ENCODE measurements at regions of chr16 and their contacts with region 1.

Region 1: GRCh38 chr16:71484006-71484893 is 4.9 kb downstream of the ZNF19 start:
- DNase-seq: peak; percentile 64 to 95 (median 76)
- ATAC-seq: peak; percentile 84
- H3K4me3 ChIP-seq: peak overlapping the region; percentile 94
- H3K4me3 Mint-ChIP-seq: peak overlapping the region; percentile 85
- H3K27ac ChIP-seq: peak overlapping the region; percentile 93 to 99
- H3K27ac Mint-ChIP-seq: peak overlapping the region; percentile 89
- H3K4me1 ChIP-seq: peaks cover 14% of the 10 kb centered on the region
- H3K4me1 Mint-ChIP-seq: peaks cover 15% of the 10 kb centered on the region
- H3K27me3 ChIP-seq: no peaks in the 10 kb centered on the region
- H3K27me3 Mint-ChIP-seq: no peaks in the 10 kb centered on the region
- CTCF ChIP-seq: no peak

Region 2: GRCh38 chr16:71288890-71289733 is 195.1 kb before region 1 on chr16 and contains the start of gene CMTR2:
- CTCF ChIA-PET with region 1: no interaction called
- POLR2A ChIA-PET with region 1: no interaction called
- intact Hi-C with region 1: loop called in 1 of 2 experiments (anchors 5 kb)
- DNase-seq: peak; percentile 71 to 95 (median 83)
- ATAC-seq: peak; percentile 92
- H3K4me3 ChIP-seq: peak within 1 kb of the TSS; percentile 94
- H3K4me3 Mint-ChIP-seq: peak within 1 kb of the TSS; percentile 91
- H3K27ac ChIP-seq: peak within 1 kb of the TSS; percentile 80 to 90
- H3K27ac Mint-ChIP-seq: peak within 1 kb of the TSS; percentile 81
- H3K4me1 ChIP-seq: peaks cover 19% of the 10 kb centered on the region
- H3K4me1 Mint-ChIP-seq: peaks cover 31% of the 10 kb centered on the region
- H3K27me3 ChIP-seq: peaks cover 5 to 17% of the 10 kb centered on the region in 2 experiments
- H3K27me3 Mint-ChIP-seq: peaks cover 26% of the 10 kb centered on the region
- CTCF ChIP-seq: no peak
- total RNA-seq, gene CMTR2: 5.9 to 6.6 TPM